KBM-7 (cell line): ENCODE measurements at regions of chr3 and their contacts with region 1.

Region 1: DNA sequence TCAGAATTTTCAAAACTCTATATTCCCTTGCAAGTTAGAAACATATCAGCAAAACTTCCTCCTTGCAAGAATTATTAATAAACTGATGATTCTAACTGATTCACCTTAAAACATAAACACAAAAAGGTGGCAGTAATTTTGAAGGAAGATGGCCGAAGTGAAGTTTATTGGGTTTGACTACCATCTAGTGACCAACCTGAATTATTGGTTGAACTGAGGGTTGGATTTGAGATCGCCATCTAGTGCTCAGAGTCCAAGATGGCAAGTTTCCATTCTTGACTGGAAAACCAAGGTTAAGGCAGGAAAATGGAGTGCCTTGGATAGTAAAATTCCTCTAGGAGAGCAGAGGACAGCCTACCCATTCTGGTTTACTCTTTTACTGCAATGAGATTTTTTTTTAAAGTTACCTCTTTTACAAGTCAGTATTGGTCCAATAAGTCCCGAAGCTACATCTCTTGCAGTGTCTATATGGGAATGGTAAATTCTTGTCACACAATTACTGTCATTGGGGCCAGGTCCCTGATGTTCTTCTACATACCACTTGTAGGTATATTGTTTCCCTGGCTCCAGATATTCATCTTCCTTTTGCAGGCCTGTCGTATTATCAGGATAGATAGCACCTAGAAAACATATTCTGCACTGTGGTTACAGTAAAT is 51.6 kb upstream of the CP start:
- DNase-seq: peak; percentile 76

Region 2: DNA sequence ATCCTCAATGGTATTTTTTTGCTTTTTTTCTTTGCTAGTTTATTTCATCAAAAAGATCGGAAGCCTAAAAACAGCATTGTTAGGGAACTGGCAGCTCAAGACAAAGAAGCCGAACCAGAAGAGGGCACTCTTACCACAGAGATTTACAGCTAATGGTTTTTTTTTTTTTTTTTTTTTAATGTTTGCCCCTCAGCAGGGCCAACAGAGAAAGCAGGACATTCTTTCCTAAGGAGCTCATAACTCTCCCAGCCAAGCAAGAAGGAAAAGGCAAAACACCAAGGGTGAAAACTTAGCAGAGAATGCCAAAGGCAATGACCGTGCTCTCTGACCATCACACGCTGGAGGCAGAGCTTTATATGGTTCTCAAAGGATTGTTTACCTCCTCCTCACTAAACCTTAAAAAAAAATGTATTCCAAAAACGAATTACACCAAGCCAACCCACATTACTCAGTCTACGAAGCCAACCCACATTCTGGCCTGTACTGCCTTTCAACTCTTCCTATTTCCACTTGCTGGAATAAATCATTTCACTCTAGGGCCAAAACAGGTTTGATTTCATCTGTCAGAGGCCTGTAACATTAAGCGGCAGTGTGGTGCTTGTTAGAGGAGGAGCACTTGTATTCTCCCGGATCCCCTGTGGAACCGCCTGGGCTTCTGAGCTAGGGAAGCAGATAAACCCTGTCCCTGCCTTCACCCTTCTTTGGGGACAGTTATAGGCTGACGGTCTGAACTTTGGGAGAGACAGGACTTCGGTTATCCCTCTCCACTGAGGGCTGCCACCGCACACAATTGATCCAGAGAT is 317.5 kb before region 1 on chr3:
- in situ Hi-C with region 1: loop called (anchors 25 kb)
- DNase-seq: peak; percentile 72

Region 3: DNA sequence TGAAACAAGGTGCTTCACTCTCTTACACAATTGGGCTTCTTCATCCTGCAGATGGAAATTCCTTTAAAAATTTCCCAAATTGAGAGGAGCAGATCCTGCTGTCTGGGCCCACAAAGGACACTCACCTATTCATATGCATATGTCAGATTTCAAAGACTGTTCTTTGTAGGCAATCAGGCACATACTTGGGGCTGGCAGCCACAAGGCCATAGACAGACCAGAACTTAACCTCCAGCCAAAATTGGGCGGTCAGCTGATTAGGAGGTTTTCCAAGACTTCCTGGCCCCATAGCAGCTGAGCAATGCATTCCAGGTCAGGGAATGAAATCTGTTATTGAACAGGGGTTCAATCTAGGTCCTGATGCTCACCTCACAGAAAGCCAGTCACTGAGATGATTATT is 158.8 kb before region 1 on chr3:
- in situ Hi-C with region 1: loop called (anchors 10 kb)
- DNase-seq: no peak